ENCODE measurements at regions of chr6 and their contacts with region 1.

Region 1: GRCh38 chr6:108896111-108896661 is 48.0 kb downstream of the ARMC2 start:
- DNase-seq: no peak
- H3K4me3 Mint-ChIP-seq: no peak overlapping the region
- H3K27ac Mint-ChIP-seq: peak overlapping the region; percentile 56
- H3K4me1 Mint-ChIP-seq: peaks cover 33% of the 10 kb centered on the region
- H3K27me3 Mint-ChIP-seq: no peaks in the 10 kb centered on the region

Region 2: GRCh38 chr6:108203189-108204112 is 692.7 kb before region 1 on chr6:
- CTCF ChIA-PET with region 1: no interaction called
- POLR2A ChIA-PET with region 1: no interaction called
- intact Hi-C with region 1: no loop called
- DNase-seq: no peak
- H3K4me3 Mint-ChIP-seq: no peak overlapping the region
- H3K27ac Mint-ChIP-seq: no peak overlapping the region
- H3K4me1 Mint-ChIP-seq: peaks cover 3% of the 10 kb centered on the region
- H3K27me3 Mint-ChIP-seq: no peaks in the 10 kb centered on the region

Region 3: DNA sequence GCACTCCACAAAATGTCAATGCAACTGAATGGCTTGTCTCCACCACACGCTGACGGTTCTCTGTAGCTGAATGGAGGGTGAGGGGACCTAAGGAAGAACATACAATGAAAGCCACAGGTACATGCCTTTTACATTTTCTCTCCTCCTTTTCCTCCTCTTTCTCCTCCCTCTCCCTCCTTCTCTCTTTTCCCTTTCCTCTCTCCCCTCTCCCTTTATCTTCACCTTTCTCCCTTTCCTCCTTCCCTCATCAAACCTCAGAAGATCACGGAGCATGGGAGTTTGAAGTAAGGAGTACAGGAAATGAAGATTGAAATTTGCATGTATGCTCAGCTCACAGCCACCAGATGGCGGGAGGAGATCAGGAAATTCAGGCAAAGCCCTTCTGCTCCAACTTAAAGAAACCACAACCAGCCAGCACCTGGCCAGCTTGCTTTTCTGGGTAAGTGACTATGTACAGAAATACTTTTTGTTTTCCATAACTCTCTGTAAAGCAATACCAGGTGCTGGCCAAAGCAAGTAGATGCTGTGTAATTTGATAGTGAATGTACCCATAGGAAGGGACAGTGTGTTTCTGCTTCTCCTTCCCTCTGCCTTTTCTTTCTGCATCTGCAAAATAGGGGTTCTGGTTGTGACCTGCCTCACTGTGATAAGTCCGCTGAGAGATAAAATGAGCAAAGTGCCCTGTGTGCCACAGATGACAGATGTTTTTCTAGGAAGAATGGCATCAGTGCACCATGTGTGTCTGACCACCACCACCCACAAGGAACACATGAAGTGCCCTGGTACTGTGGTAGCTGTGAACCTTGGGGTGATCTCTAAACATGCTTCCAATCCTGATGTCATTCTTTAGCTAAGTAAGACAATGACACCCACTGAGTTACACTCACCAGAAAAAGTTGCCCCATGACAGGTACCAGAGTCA is 354.1 kb before region 1 on chr6:
- CTCF ChIA-PET with region 1: interaction called, 59 read pairs
- POLR2A ChIA-PET with region 1: no interaction called
- intact Hi-C with region 1: loop called (anchors 1 kb)
- DNase-seq: peak; percentile 79
- H3K4me3 Mint-ChIP-seq: peak overlapping the region; percentile 17
- H3K27ac Mint-ChIP-seq: no peak overlapping the region
- H3K4me1 Mint-ChIP-seq: peaks cover 7% of the 10 kb centered on the region
- H3K27me3 Mint-ChIP-seq: peaks cover 6% of the 10 kb centered on the region

Region 4: GRCh38 chr6:108835218-108835850 is 60.9 kb before region 1 on chr6:
- CTCF ChIA-PET with region 1: interaction called, 14 read pairs
- POLR2A ChIA-PET with region 1: interaction called, 5 read pairs
- intact Hi-C with region 1: loop called (anchors 1 kb)
- DNase-seq: peak; percentile 91
- H3K4me3 Mint-ChIP-seq: no peak overlapping the region
- H3K27ac Mint-ChIP-seq: no peak overlapping the region
- H3K4me1 Mint-ChIP-seq: peaks cover 13% of the 10 kb centered on the region
- H3K27me3 Mint-ChIP-seq: no peaks in the 10 kb centered on the region

Region 5: DNA sequence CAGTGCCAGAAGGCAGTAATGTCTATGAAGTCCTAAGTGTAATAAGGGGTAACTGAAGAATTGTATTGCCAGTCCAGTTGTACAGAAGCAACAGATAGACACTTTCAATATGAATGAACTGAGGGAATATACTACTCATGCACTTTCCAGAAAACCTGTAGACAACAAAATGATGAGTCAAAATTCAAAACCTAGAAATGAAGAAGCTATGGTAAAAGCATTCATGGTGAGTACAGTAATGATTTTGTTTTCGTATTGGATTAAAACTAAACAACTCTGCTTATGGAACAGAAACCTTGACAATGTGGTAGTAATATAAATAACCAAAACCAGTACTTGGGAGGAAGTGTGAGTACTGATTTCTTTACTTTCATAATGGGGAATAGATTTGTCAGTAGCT is 13.0 kb before region 1 on chr6:
- CTCF ChIA-PET with region 1: interaction called, 5 read pairs
- POLR2A ChIA-PET with region 1: interaction called, 4 read pairs
- intact Hi-C with region 1: loop called (anchors 1 kb)
- DNase-seq: no peak
- H3K4me3 Mint-ChIP-seq: no peak overlapping the region
- H3K27ac Mint-ChIP-seq: peak overlapping the region; percentile 73
- H3K4me1 Mint-ChIP-seq: peaks cover 38% of the 10 kb centered on the region
- H3K27me3 Mint-ChIP-seq: peaks cover 6% of the 10 kb centered on the region

Region 6: GRCh38 chr6:108921547-108922361 is 25.6 kb after region 1 on chr6:
- CTCF ChIA-PET with region 1: interaction called, 16 read pairs
- POLR2A ChIA-PET with region 1: no interaction called
- intact Hi-C with region 1: no loop called
- DNase-seq: peak; percentile 68
- H3K4me3 Mint-ChIP-seq: peak overlapping the region; percentile 33
- H3K27ac Mint-ChIP-seq: peak overlapping the region; percentile 81
- H3K4me1 Mint-ChIP-seq: peaks cover 31% of the 10 kb centered on the region
- H3K27me3 Mint-ChIP-seq: peaks cover 4% of the 10 kb centered on the region